Left cardiac atrium (tissue), 4 donors: ENCODE measurements at regions of chr1 and their contacts with region 1.

Region 1: GRCh38 chr1:44244744-44245385 is 31.6 kb downstream of the DMAP1 start:
- DNase-seq: no peak
- ATAC-seq: no peak

Region 2: GRCh38 chr1:43648221-43648847 is 596.5 kb before region 1 on chr1:
- intact Hi-C with region 1: no loop called
- DNase-seq: no peak
- ATAC-seq: no peak

Region 3: GRCh38 chr1:44293761-44294315 is 49.0 kb after region 1 on chr1:
- intact Hi-C with region 1: loop called in 1 of 2 experiments (anchors 2 kb)
- DNase-seq: peak; percentile 65
- ATAC-seq: peak; percentile 75 to 79

Region 4: DNA sequence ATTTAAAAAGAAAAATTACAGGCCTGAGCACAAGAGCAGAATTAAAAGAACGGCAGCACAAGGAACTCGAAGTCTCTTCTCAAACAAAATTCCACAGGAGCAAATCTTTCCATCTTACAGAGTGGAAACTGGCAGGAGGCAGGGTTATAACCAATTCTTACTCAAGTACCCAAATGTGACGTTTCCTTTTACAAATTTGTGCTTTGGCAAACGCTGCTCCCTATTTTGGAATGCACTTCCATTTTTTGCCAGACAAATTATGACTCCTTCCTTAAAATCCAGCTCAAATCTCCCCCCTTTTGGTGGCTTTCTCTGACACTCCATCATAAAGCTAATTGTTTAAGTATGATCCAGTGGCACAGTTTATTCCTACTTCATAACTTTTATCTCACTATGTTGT is 102.4 kb after region 1 on chr1:
- intact Hi-C with region 1: no loop called
- DNase-seq: no peak
- ATAC-seq: peak; percentile 30 to 34